IMR-90 (cell line): ENCODE measurements at regions of chr2 and their contacts with region 1.

Region 1: DNA sequence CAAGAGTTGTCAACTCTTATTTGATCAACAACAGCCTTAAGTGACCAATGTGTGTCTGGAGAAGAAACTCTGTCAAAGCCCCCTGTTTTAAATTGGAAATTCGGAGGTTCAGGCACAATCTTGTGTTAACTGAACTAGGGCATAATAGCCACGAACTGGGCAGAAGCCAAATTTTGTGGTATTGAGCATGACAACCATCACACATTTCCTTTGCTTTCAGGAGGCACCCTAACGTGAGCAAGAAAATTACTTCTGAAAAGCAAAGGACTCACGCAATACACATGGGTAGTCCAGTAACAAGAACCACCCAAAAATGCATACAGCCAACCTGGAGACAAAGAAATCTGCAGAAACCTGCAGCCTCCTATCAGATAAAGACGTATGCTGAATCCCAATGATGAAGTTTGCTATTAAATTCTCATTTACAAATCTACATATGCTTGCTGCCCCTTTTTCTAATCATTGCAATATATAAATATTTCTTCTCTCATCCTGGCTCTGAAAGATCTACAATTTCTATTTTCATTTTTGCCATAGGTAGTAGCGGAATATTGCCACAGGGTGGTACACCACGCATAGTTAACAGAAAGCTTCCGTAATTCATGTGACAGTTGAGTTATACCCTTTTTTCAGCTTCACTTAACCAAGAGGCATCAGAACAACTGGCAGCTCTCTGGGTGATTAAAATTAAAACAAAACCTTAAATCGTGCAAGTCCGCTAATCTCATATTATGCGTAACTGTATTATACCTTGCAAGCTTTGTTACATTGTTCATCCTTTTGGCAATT is 495.8 kb downstream of the NRXN1 start:
- DNase-seq: peak; percentile 55
- ATAC-seq: peak; percentile 89
- H3K4me3 ChIP-seq: no peak overlapping the region
- H3K27ac ChIP-seq: no peak overlapping the region
- H3K4me1 ChIP-seq: no peaks in the 10 kb centered on the region
- H3K27me3 ChIP-seq: no peaks in the 10 kb centered on the region; the same call in 1 of the 2 replicates
- CTCF ChIP-seq: peak; percentile 73
- POLR2A ChIP-seq: no peak
- RAD21 ChIP-seq: peak; percentile 85

Region 2: GRCh38 chr2:51031021-51031780 is 495.0 kb after region 1 on chr2:
- CTCF ChIA-PET with region 1: no interaction called
- POLR2A ChIA-PET with region 1: no interaction called
- dilution Hi-C with region 1: no loop called
- in situ Hi-C with region 1: no loop called
- intact Hi-C with region 1: loop called (anchors 5 kb)
- DNase-seq: no peak
- ATAC-seq: no peak
- H3K4me3 ChIP-seq: no peak overlapping the region
- H3K27ac ChIP-seq: no peak overlapping the region
- H3K4me1 ChIP-seq: no peaks in the 10 kb centered on the region
- H3K27me3 ChIP-seq: peaks cover 6% of the 10 kb centered on the region
- CTCF ChIP-seq: no peak
- POLR2A ChIP-seq: no peak
- RAD21 ChIP-seq: no peak

Region 3: DNA sequence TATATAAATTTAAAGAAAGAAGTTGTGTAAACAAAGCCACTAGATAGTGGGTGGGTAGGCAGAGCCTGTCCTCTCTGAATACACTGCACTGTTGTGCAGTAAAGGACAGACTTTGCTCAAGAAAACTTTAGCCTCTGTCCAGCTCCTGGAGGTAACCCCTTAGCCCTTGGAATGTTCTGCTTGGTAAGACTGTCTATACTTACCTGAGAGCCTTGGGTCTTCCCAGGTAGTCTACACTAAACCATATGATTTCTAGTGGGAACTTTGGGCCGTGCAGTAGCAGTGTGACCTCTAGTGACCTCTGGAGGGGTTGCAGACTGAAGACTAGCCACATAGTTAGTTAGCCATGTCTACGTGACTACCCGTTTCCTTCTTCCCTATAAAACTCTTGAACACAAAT is 1174.1 kb after region 1 on chr2:
- CTCF ChIA-PET with region 1: no interaction called
- POLR2A ChIA-PET with region 1: no interaction called
- dilution Hi-C with region 1: no loop called
- in situ Hi-C with region 1: no loop called
- intact Hi-C with region 1: loop called (anchors 5 kb)
- DNase-seq: no peak
- ATAC-seq: no peak
- H3K4me3 ChIP-seq: no peak overlapping the region
- H3K27ac ChIP-seq: no peak overlapping the region
- H3K4me1 ChIP-seq: no peaks in the 10 kb centered on the region
- H3K27me3 ChIP-seq: no peaks in the 10 kb centered on the region
- CTCF ChIP-seq: no peak
- POLR2A ChIP-seq: no peak
- RAD21 ChIP-seq: peak; percentile 19; the same call in 1 of the 2 replicates

Region 4: DNA sequence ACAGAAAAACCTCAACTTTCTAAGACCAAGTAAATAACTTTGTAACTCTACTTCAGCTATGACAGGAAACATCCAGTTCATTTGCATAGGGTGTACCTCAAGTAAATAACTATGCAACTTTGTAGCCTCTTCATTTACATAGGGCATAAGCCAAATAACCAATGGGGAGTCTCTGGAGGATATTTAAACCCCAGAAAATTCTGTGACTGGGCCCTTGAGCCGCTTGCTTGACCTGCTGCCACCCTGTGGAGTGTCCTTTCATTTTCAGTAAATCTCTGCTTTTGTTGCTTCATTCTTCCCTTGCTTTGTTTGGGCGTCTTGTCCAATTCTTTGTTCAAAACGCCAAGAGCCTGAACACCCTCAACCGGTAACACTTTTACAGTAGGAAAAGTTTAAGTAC is 1608.4 kb after region 1 on chr2:
- CTCF ChIA-PET with region 1: no interaction called
- POLR2A ChIA-PET with region 1: no interaction called
- dilution Hi-C with region 1: no loop called
- in situ Hi-C with region 1: no loop called
- intact Hi-C with region 1: loop called (anchors 5 kb)
- DNase-seq: peak; percentile 1
- ATAC-seq: peak; percentile 49
- H3K4me3 ChIP-seq: no peak overlapping the region
- H3K27ac ChIP-seq: no peak overlapping the region
- H3K4me1 ChIP-seq: no peaks in the 10 kb centered on the region
- H3K27me3 ChIP-seq: no peaks in the 10 kb centered on the region
- CTCF ChIP-seq: no peak
- POLR2A ChIP-seq: no peak
- RAD21 ChIP-seq: peak; percentile 23; the same call in 1 of the 2 replicates